CD8-positive, alpha-beta T cell (primary cell): ENCODE measurements at regions of chr21 and their contacts with region 1.

Region 1: DNA sequence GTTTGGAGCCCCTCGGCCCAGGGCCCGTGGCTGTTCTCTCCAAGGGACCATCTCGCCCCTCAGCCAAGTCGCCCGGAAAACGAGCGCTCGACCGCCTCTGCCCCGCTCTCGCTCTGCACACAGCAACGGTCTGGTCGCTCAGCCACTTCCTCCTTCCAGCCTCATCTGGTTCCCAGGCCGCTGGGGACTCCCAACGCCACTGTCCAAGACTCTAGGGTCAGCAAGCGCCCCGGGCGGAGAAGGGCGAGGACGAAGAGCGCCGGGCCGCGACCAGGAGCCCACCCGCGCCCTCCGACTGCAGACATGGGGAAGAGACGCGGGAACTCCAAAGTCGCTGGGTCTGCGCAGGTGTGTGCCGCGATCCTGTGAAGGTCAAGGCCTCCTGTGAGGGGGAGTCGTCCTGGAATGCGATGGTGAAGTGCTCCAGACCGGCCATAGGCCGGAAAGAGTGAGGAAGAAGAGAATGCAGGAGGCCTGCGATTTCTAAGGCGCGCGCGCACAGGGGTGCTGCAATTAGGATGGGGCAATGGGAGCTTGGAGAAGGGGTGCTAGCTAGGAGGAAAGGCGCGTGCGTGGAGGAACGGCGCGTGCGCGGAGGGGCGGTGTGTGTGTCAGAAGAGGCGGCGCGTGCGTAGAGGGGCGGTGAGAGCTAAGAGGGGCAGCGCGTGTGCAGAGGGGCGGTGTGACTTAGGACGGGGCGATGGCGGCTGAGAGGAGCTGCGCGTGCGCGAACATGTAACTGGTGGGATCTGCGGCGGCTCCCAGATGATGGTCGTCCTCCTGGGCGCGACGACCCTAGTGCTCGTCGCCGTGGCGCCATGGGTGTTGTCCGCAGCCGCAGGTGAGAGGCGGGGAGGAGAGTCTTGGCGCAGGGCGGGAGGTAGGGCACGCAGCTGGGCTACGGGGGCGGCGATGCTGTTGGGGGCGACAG is at the start of gene IFNAR1:
- DNase-seq: peak; percentile 98 to 100 (median 99)
- ATAC-seq: peak; percentile 92
- H3K4me3 ChIP-seq: peak within 1 kb of the TSS; percentile 80 to 92
- H3K4me3 Mint-ChIP-seq: no peak within 1 kb of the TSS
- H3K27ac ChIP-seq: peak within 1 kb of the TSS; percentile 88 to 92
- H3K27ac Mint-ChIP-seq: no peak within 1 kb of the TSS
- H3K4me1 ChIP-seq: peaks cover 31% of the 10 kb centered on the region
- H3K4me1 Mint-ChIP-seq: peaks cover 30% of the 10 kb centered on the region
- H3K27me3 ChIP-seq: no peaks in the 10 kb centered on the region
- H3K27me3 Mint-ChIP-seq: no peaks in the 10 kb centered on the region
- CTCF ChIP-seq: no peak
- total RNA-seq, gene IFNAR1: 15.1 to 18.6 TPM

Region 2: GRCh38 chr21:33266050-33266788 is 58.3 kb before region 1 on chr21 and contains the start of gene IL10RB:
- CTCF ChIA-PET with region 1: interaction called, 5 read pairs
- POLR2A ChIA-PET with region 1: interaction called, 11 read pairs
- intact Hi-C with region 1: loop called in 1 of 2 experiments (anchors 2 kb)
- DNase-seq: peak; percentile 21 to 88 (median 72)
- ATAC-seq: peak; percentile 85
- H3K4me3 ChIP-seq: peak within 1 kb of the TSS; percentile 84 to 89
- H3K4me3 Mint-ChIP-seq: peak within 1 kb of the TSS; percentile 93
- H3K27ac ChIP-seq: peak within 1 kb of the TSS; percentile 70 to 75
- H3K27ac Mint-ChIP-seq: peak within 1 kb of the TSS; percentile 95
- H3K4me1 ChIP-seq: peaks cover 46% of the 10 kb centered on the region
- H3K4me1 Mint-ChIP-seq: peaks cover 66% of the 10 kb centered on the region
- H3K27me3 ChIP-seq: no peaks in the 10 kb centered on the region
- H3K27me3 Mint-ChIP-seq: no peaks in the 10 kb centered on the region
- CTCF ChIP-seq: no peak
- total RNA-seq, gene IL10RB: 7.4 to 8.2 TPM

Region 3: GRCh38 chr21:33299181-33299752 is 25.3 kb before region 1 on chr21:
- CTCF ChIA-PET with region 1: interaction called, 3 read pairs
- POLR2A ChIA-PET with region 1: interaction called, 13 read pairs
- intact Hi-C with region 1: no loop called
- DNase-seq: peak in 7 of 9 experiments; percentile 9 to 68 (median 31)
- ATAC-seq: peak; percentile 93
- H3K4me3 ChIP-seq: peak overlapping the region in 1 of 2 experiments; percentile 24
- H3K4me3 Mint-ChIP-seq: peak overlapping the region; percentile 72
- H3K27ac ChIP-seq: peak overlapping the region; percentile 4 to 58
- H3K27ac Mint-ChIP-seq: peak overlapping the region; percentile 80
- H3K4me1 ChIP-seq: peaks cover 36% of the 10 kb centered on the region
- H3K4me1 Mint-ChIP-seq: peaks cover 44% of the 10 kb centered on the region
- H3K27me3 ChIP-seq: no peaks in the 10 kb centered on the region
- H3K27me3 Mint-ChIP-seq: no peaks in the 10 kb centered on the region
- CTCF ChIP-seq: peak; percentile 29

Region 4: DNA sequence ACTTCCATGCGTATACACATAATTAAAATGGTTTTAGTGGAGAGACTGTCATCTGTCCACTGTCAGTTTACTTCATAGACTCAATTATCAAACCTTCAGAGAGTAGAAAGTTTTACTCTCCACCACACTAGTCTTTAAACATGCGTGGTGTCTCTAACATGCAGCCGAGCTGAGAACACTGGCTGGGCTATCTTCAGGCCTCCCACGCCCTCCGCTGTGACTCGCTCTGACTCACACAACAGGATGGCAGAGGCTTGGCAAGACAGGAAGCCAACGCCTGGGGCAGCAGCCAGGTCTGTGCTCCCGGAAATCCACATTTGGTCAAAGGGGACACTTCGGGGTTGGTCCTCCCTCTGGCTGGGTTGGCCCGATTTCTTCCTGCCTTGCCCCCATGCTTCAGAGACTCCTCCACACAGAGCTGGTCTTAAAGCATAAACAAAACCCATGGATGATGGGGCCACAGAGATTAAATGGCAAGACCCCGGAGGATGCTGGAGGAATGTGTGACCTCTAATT is 56.0 kb after region 1 on chr21:
- CTCF ChIA-PET with region 1: interaction called, 3 read pairs
- POLR2A ChIA-PET with region 1: interaction called, 10 read pairs
- intact Hi-C with region 1: loop called in 1 of 2 experiments (anchors 5 kb)
- DNase-seq: peak; percentile 53 to 88 (median 82)
- ATAC-seq: peak; percentile 72
- H3K4me3 ChIP-seq: peak overlapping the region in 1 of 2 experiments; percentile 17
- H3K4me3 Mint-ChIP-seq: peak overlapping the region; percentile 60
- H3K27ac ChIP-seq: peak overlapping the region; percentile 7 to 49
- H3K27ac Mint-ChIP-seq: peak overlapping the region; percentile 93
- H3K4me1 ChIP-seq: peaks cover 61% of the 10 kb centered on the region
- H3K4me1 Mint-ChIP-seq: peaks cover 60% of the 10 kb centered on the region
- H3K27me3 ChIP-seq: peaks cover 0 to 18% of the 10 kb centered on the region in 2 experiments
- H3K27me3 Mint-ChIP-seq: peaks cover 3% of the 10 kb centered on the region
- CTCF ChIP-seq: no peak

Region 5: GRCh38 chr21:33479679-33480480 is 155.3 kb after region 1 on chr21 and contains the start of gene TMEM50B:
- CTCF ChIA-PET with region 1: no interaction called
- POLR2A ChIA-PET with region 1: interaction called, 17 read pairs
- intact Hi-C with region 1: no loop called
- DNase-seq: peak; percentile 94 to 98 (median 95)
- ATAC-seq: peak; percentile 87
- H3K4me3 ChIP-seq: peak within 1 kb of the TSS; percentile 79 to 88
- H3K4me3 Mint-ChIP-seq: peak within 1 kb of the TSS; percentile 89
- H3K27ac ChIP-seq: peak within 1 kb of the TSS; percentile 83 to 87
- H3K27ac Mint-ChIP-seq: peak within 1 kb of the TSS; percentile 96
- H3K4me1 ChIP-seq: peaks cover 13% of the 10 kb centered on the region
- H3K4me1 Mint-ChIP-seq: peaks cover 28% of the 10 kb centered on the region
- H3K27me3 ChIP-seq: no peaks in the 10 kb centered on the region
- H3K27me3 Mint-ChIP-seq: no peaks in the 10 kb centered on the region
- CTCF ChIP-seq: peak; percentile 31
- total RNA-seq, gene TMEM50B: 32.6 to 34.0 TPM

Region 6: DNA sequence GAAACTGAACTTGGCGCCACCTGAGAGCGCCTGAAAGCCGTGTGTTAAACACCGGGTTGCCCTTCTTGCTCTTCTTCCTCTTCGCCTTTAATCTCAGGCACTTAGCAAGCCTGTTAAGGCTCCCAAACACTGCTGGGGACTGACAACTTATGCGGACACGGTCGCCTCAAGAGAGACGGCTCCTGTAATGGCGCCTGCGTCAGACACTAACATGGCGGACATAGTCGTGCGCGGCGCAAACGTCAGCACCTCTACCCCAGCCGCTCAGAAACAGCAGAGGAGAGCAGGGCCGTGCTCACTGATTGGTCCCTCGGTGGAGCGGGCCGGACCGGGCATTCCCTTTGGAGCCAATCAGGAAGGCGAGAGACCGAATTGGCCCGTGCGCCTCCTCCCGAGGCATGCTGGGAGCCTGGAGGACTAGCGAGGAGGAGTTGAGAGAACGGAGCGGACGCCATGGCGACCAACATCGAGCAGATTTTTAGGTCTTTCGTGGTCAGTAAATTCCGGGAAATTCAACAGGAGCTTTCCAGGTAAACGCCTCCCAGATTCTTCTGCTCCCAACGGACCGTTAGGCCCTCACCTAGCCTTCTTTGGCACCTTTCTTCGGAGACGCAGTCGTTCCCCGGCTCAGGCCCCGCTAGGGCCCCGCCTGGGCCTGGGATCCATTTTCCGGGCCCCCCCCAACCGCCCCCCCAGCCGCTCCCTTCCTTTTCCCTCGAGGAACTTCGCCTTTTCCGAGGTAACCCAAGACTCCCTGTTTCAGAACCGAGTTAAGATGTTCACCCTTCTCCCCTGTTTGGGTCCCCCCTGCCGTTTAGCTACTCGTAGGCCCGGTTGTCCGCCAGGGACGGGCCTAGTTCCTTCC is 218.3 kb after region 1 on chr21 and contains the start of gene SON:
- CTCF ChIA-PET with region 1: no interaction called
- POLR2A ChIA-PET with region 1: interaction called, 4 read pairs
- intact Hi-C with region 1: loop called in 1 of 2 experiments (anchors 2 kb)
- DNase-seq: peak; percentile 93 to 99 (median 96)
- ATAC-seq: peak; percentile 89
- H3K4me3 ChIP-seq: peak within 1 kb of the TSS; percentile 87 to 88
- H3K4me3 Mint-ChIP-seq: peak within 1 kb of the TSS; percentile 96
- H3K27ac ChIP-seq: peak within 1 kb of the TSS; percentile 99
- H3K27ac Mint-ChIP-seq: peak within 1 kb of the TSS; percentile 99
- H3K4me1 ChIP-seq: peaks cover 44% of the 10 kb centered on the region
- H3K4me1 Mint-ChIP-seq: peaks cover 55% of the 10 kb centered on the region
- H3K27me3 ChIP-seq: no peaks in the 10 kb centered on the region
- H3K27me3 Mint-ChIP-seq: no peaks in the 10 kb centered on the region
- CTCF ChIP-seq: no peak
- total RNA-seq, gene SON: 418 to 422 TPM